HEK293 (cell line): ENCODE measurements at regions of chr7 and their contacts with region 1.

Region 1: DNA sequence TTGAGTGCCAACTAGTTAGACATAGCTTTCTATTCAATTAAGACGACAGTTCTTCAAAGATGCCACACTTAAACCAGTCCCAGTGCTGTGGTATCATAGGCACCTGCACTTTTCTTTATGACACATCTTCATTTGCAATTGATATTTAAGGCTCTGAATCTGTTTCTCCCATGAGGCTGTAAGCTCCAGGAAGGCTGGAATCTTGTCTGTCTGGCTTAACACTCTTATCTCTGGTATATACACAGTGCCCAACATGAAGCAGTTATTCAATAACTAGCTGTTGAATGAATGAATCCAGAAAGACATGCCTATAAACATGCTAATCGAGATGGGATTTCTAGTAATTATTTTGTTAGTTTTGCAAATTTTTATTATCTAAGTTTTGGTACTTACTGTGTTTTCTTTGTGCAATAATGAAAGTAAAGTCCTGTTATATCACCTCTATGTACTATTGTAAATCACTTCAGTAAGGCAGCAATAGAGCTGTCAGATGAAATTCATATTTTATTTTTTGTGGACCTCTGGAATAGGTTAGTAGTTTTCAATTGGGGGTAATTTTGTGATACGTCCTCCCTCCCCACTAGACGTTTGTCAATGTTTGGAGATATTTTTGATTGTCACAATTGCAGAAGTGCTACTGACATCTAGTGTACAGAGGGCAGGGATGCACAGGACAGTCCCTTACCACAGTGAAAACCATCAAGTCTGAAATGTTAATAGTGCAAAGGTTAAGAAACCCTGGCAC is 51.3 kb upstream of the STEAP4 start:
- H3K4me3 ChIP-seq: no peak overlapping the region
- H3K27ac ChIP-seq: no peak overlapping the region
- H3K4me1 ChIP-seq: no peaks in the 10 kb centered on the region
- CTCF ChIP-seq: no peak

Region 2: DNA sequence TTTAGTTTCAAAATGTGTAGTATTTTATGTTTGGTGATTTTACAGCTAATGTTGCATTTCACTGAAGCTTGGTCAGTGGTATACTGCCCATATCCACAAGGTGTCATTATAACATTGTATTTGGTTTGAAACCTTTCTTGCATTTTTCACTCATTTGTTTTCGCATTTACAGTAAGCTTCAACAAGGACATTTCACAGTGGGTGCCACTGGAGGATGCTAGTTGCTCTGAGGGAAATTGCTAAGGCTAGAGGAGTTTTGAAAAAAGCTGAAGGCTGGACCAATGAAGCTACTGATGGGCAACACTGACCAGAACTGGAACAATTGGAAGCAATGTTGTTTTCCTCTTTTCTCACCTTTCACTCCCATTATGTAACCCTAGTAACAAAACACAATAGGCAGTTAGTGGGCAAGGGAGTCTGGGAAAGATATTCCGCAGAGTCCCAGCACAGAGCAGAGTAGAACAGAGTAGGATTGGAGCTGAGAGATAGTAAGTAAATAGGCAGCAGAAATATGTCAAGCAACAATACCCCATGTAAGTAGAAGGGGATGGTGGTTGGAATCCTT is 114.5 kb before region 1 on chr7:
- CTCF ChIA-PET with region 1: interaction called, 84 read pairs
- POLR2A ChIA-PET with region 1: no interaction called
- H3K4me3 ChIP-seq: no peak overlapping the region
- H3K27ac ChIP-seq: no peak overlapping the region
- H3K4me1 ChIP-seq: no peaks in the 10 kb centered on the region
- CTCF ChIP-seq: peak; percentile 58

Region 3: DNA sequence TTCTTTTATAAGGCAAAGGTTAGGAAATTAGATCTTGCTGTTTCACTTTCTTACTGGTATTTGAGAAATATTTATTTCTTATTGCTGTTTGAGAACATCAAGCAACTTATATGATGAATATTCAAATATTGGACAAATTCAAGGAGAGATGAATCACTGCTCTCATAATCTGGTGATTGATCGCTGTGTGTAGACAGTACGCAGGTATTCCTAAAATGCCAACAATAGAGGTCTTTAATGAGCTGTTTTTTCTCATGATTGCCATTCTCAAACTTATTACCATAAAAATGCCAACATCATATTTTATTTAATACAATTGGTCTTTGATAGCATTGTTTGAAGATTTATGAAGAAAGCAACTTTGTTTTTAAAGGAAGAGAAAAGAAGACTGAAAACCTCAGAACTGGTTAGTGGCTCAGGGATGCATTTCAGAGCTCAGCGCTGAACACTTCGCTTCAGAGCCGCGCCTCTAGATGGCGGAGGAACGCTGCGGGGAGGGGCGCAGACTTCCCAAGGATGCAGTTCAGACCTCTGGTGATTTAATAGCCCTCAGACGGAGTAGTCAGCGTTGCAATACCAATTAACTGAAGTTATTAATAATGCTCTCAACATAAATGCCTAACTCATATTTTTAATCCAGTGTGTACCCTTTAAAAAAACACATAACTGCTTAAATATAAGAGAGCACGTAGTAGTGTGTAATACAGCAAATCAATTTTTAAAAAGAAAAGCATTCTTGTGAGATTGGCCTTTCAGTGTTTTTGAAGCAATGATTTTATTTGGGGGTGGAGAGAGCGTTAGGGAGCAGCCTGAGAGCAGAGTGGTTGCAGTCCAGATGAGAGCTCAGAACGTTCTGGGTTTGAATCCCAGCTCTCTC is 12.8 kb before region 1 on chr7:
- CTCF ChIA-PET with region 1: interaction called, 11 read pairs
- POLR2A ChIA-PET with region 1: no interaction called
- H3K4me3 ChIP-seq: no peak overlapping the region
- H3K27ac ChIP-seq: no peak overlapping the region
- H3K4me1 ChIP-seq: no peaks in the 10 kb centered on the region
- CTCF ChIP-seq: no peak